Endothelial cell of umbilical vein (primary cell): ENCODE measurements at regions of chr10 and their contacts with region 1.

Region 1: DNA sequence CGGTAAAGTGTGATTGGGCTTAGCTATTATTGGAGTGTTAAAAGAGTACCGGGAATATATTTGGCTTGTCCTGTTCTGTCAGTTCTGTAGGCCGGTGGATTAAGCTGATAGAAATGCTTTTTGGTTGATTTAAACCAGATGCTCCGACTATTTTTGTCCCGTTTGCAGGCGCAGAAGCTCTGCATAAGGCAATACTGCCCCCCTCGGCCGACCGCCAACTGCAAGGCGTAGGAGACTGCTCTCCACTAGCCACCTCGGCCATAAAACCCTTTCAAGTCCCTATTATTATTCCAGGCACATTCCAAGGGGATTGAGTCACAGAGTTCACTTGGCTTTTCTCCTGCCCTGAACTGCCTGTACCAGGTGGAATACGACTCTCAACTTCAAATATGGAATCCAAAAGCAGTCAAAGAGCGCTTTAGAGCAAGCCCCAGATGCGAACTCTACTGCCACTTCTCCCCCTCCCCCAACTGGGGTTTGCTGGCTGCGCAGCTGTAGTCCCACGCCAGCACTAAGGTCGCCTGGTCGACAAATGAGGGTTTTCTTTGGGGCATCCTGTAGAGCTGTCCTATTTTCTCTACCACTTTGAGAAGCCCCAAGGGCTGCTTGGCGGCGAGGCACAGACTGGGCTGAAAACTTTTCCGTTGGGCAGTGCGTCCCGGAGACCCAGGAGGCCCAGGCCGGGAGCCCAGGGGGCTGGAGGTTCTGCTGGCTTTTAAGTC is 108.3 kb downstream of the REEP3 start:
- DNase-seq: peak; percentile 98
- H3K4me3 ChIP-seq: peak overlapping the region; percentile 18 to 58 (median 47)
- H3K27ac ChIP-seq: peak overlapping the region; percentile 98
- H3K4me1 ChIP-seq: peaks cover 34% of the 10 kb centered on the region
- H3K27me3 ChIP-seq: no peaks in the 10 kb centered on the region
- CTCF ChIP-seq: peak; percentile 86 to 92
- POLR2A ChIP-seq: peak; percentile 27

Region 2: DNA sequence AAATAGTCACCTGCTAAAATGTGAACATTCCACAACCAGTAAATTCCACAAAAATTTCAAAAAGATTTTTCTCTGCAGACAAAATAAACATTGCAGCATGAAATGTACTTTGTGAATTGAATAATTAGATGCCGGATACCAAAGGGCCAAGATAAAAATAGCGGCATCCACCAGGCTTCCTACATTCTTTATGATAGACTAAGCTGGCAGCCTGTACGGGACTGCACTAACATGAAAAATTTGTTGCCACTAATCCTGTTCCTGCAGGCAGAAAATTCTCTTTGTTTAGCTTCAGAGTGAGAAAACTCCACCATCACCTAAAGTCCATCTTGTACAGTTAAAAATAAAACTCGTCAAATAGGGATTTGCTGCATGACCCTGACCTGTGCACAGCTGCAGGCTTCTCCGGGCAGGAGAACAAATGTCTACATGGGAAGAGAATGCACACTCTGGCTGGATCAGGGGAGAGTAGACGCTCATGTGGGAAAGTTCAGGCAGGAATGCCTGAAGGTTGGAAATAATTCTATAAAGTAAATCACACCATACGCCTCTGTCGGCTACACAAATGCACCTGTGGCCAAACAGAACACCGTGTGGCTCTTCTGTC is 840.6 kb before region 1 on chr10:
- CTCF ChIA-PET with region 1: no interaction called
- POLR2A ChIA-PET with region 1: no interaction called
- dilution Hi-C with region 1: no loop called
- intact Hi-C with region 1: no loop called
- DNase-seq: no peak
- H3K4me3 ChIP-seq: no peak overlapping the region
- H3K27ac ChIP-seq: no peak overlapping the region
- H3K4me1 ChIP-seq: no peaks in the 10 kb centered on the region
- H3K27me3 ChIP-seq: peaks cover 0 to 7% of the 10 kb centered on the region in 2 experiments
- CTCF ChIP-seq: no peak
- POLR2A ChIP-seq: no peak

Region 3: DNA sequence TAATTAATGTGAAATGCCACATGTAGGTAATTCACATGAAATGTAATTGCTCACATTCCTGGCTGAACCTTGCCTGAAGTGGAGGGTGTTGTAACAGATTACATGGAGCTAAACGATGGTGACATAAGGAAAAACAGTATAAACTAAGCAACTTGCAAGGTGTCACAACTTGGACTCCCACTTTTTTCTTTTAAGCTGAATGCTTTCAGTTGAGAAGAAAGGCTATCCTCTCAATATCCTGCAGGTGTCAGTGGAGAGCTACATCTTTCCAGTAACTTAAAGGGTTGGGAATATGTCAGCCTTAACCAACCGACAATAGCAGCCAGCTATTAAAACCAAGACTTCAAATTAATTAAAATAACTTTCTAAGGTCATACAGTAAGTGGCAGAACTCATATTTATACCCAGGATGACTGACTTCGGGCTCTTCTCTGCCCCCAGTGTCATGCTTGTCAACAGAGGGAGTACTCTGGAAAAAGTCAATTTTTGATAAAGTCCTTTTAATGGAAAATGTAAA is 462.7 kb before region 1 on chr10:
- CTCF ChIA-PET with region 1: interaction called, 229 read pairs
- POLR2A ChIA-PET with region 1: no interaction called
- dilution Hi-C with region 1: no loop called
- intact Hi-C with region 1: loop called (anchors 1 kb)
- DNase-seq: peak; percentile 84
- H3K4me3 ChIP-seq: no peak overlapping the region
- H3K27ac ChIP-seq: no peak overlapping the region
- H3K4me1 ChIP-seq: no peaks in the 10 kb centered on the region
- H3K27me3 ChIP-seq: no peaks in the 10 kb centered on the region
- CTCF ChIP-seq: peak; percentile 61 to 62
- POLR2A ChIP-seq: no peak

Region 4: GRCh38 chr10:63268798-63269503 is 360.6 kb before region 1 on chr10:
- CTCF ChIA-PET with region 1: interaction called, 27 read pairs
- POLR2A ChIA-PET with region 1: interaction called, 20 read pairs
- dilution Hi-C with region 1: no loop called
- intact Hi-C with region 1: loop called (anchors 1 kb)
- DNase-seq: peak; percentile 98
- H3K4me3 ChIP-seq: peak overlapping the region; percentile 75 to 99 (median 85)
- H3K27ac ChIP-seq: peak overlapping the region; percentile 92
- H3K4me1 ChIP-seq: peaks cover 31% of the 10 kb centered on the region
- H3K27me3 ChIP-seq: no peaks in the 10 kb centered on the region
- CTCF ChIP-seq: peak in 1 of 2 donors; percentile 23
- POLR2A ChIP-seq: peak; percentile 99

Region 5: GRCh38 chr10:63465293-63466143 is 164.0 kb before region 1 on chr10 and contains the start of gene JMJD1C:
- CTCF ChIA-PET with region 1: interaction called, 5 read pairs
- POLR2A ChIA-PET with region 1: no interaction called
- dilution Hi-C with region 1: no loop called
- intact Hi-C with region 1: loop called (anchors 1 kb)
- DNase-seq: peak; percentile 80
- H3K4me3 ChIP-seq: peak within 1 kb of the TSS; percentile 55 to 98 (median 83)
- H3K27ac ChIP-seq: peak within 1 kb of the TSS; percentile 82
- H3K4me1 ChIP-seq: peaks cover 5% of the 10 kb centered on the region
- H3K27me3 ChIP-seq: no peaks in the 10 kb centered on the region
- CTCF ChIP-seq: peak in 1 of 2 donors; percentile 12
- POLR2A ChIP-seq: peak; percentile 84
- total RNA-seq, gene JMJD1C: 93.3 and 97.1 TPM in 2 replicates

Region 6: GRCh38 chr10:63573068-63573697 is 56.3 kb before region 1 on chr10:
- CTCF ChIA-PET with region 1: interaction called, 21 read pairs
- POLR2A ChIA-PET with region 1: no interaction called
- dilution Hi-C with region 1: no loop called
- intact Hi-C with region 1: loop called (anchors 1 kb)
- DNase-seq: peak; percentile 95
- H3K4me3 ChIP-seq: peak overlapping the region in 1 of 3 experiments; percentile 16
- H3K27ac ChIP-seq: peak overlapping the region; percentile 68
- H3K4me1 ChIP-seq: peaks cover 33% of the 10 kb centered on the region
- H3K27me3 ChIP-seq: no peaks in the 10 kb centered on the region
- CTCF ChIP-seq: no peak
- POLR2A ChIP-seq: no peak

Region 7: GRCh38 chr10:63707254-63707910 is 77.9 kb after region 1 on chr10:
- CTCF ChIA-PET with region 1: interaction called, 39 read pairs
- POLR2A ChIA-PET with region 1: interaction called, 14 read pairs
- dilution Hi-C with region 1: loop called (anchors 5 kb)
- intact Hi-C with region 1: loop called (anchors 1 kb)
- DNase-seq: peak; percentile 99
- H3K4me3 ChIP-seq: no peak overlapping the region
- H3K27ac ChIP-seq: peak overlapping the region; percentile 74
- H3K4me1 ChIP-seq: peaks cover 32% of the 10 kb centered on the region
- H3K27me3 ChIP-seq: no peaks in the 10 kb centered on the region
- CTCF ChIP-seq: no peak
- POLR2A ChIP-seq: no peak